Endothelial cell of umbilical vein (primary cell): ENCODE measurements at regions of chr6 and their contacts with region 1.

Region 1: DNA sequence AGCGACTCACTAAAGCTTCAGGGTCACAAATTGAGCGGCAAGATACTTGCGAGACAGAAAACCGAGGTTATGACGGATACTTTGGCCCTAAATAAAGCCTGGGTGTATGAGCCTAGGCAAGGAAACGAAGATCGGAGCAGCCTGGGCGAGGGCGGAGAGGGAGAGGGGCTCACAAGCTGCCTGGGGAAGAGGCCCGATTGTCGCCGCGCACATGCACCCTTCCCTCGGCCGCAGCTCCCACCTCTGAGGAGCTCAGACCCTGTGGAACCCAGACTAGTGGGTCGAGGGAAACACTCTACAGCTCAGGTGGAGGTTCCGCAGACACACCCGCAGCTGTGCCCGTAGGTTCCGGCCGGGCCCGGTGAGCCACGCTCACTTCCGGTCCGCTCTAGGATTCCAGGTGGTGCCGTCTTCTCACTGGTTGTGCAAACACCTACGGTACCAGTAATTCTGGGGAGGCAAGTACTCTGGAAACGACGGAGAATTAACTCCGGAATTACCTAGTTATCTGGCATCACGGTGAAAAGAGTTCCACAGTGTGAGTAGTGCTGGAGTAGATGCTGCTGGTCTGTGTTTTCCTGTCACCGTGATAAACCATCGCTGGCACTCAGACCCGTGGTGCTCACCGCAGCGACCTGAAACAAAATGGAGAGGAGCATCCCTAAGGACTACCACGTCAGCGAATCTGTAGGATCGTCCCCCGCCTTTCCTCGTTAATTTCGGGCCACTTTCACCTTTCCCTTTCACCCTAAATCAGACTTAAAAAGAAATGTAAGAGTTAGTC is 61.5 kb downstream of the GPX5 start:
- DNase-seq: no peak
- H3K4me3 ChIP-seq: peak overlapping the region; percentile 6 to 50 (median 25)
- H3K27ac ChIP-seq: no peak overlapping the region
- H3K4me1 ChIP-seq: peaks cover 12% of the 10 kb centered on the region
- H3K27me3 ChIP-seq: peaks cover 22 to 47% of the 10 kb centered on the region in 2 experiments
- CTCF ChIP-seq: no peak
- POLR2A ChIP-seq: no peak

Region 2: GRCh38 chr6:27902335-27903314 is 684.5 kb before region 1 on chr6:
- CTCF ChIA-PET with region 1: no interaction called
- POLR2A ChIA-PET with region 1: no interaction called
- dilution Hi-C with region 1: no loop called
- intact Hi-C with region 1: loop called (anchors 10 kb)
- DNase-seq: peak; percentile 92
- H3K4me3 ChIP-seq: peak overlapping the region; percentile 39 to 91 (median 86)
- H3K27ac ChIP-seq: peak overlapping the region; percentile 37
- H3K4me1 ChIP-seq: no peaks in the 10 kb centered on the region
- H3K27me3 ChIP-seq: peaks cover 0 to 11% of the 10 kb centered on the region in 2 experiments
- CTCF ChIP-seq: no peak
- POLR2A ChIP-seq: no peak

Region 3: DNA sequence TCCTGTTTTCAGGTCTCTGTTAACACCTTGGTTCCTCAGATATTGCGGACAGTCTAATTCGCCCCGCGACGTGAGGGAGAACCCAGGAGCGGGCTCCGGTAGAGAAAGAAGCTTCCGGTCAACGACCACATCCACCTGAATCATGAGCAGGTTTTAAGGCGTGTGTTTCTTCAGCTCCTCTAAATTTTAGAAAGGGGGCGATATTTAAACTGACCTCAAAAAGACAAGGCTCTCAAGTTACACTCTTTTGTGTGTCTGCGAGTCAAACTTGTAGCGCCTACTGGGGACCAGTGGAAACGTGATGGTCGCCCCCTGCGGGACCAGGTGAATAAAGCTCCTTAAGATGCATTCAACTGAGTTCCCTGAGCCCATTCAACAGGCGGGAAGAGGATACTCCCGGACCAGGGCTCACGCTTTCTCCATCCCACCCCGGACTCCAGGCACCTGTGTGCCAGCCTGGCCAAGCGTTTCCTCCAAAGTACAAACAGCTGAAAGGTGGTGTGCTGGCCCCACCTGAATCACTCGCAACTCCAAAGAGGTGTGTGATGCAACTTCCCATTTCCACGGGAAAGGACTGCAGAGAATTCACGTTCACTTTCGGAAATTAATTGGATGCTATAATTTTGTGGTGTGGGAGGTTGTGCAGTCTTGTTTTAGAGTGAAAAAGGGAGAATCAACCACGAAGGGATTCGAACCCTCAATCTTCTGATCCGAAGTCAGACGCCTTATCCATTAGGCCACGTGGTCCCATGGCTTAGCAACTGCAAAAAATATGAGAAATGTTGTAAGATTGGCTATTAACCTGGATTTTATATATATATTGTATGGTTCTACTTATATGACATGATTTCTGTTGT is 44.5 kb before region 1 on chr6:
- CTCF ChIA-PET with region 1: interaction called, 3 read pairs
- POLR2A ChIA-PET with region 1: no interaction called
- dilution Hi-C with region 1: no loop called
- intact Hi-C with region 1: loop called (anchors 2 kb)
- DNase-seq: peak; percentile 70
- H3K4me3 ChIP-seq: no peak overlapping the region
- H3K27ac ChIP-seq: no peak overlapping the region
- H3K4me1 ChIP-seq: peaks cover 13% of the 10 kb centered on the region
- H3K27me3 ChIP-seq: peaks cover 0 to under 1% of the 10 kb centered on the region in 2 experiments
- CTCF ChIP-seq: peak in 1 of 2 donors; percentile 33
- POLR2A ChIP-seq: no peak

Region 4: GRCh38 chr6:28648035-28648877 is 61.1 kb after region 1 on chr6:
- CTCF ChIA-PET with region 1: interaction called, 3 read pairs
- POLR2A ChIA-PET with region 1: no interaction called
- dilution Hi-C with region 1: no loop called
- intact Hi-C with region 1: loop called (anchors 2 kb)
- DNase-seq: peak; percentile 86
- H3K4me3 ChIP-seq: peak overlapping the region; percentile 47 to 97 (median 70)
- H3K27ac ChIP-seq: peak overlapping the region; percentile 14
- H3K4me1 ChIP-seq: peaks cover 3% of the 10 kb centered on the region
- H3K27me3 ChIP-seq: peaks cover 7 to 20% of the 10 kb centered on the region in 2 experiments
- CTCF ChIP-seq: no peak
- POLR2A ChIP-seq: no peak

Region 5: DNA sequence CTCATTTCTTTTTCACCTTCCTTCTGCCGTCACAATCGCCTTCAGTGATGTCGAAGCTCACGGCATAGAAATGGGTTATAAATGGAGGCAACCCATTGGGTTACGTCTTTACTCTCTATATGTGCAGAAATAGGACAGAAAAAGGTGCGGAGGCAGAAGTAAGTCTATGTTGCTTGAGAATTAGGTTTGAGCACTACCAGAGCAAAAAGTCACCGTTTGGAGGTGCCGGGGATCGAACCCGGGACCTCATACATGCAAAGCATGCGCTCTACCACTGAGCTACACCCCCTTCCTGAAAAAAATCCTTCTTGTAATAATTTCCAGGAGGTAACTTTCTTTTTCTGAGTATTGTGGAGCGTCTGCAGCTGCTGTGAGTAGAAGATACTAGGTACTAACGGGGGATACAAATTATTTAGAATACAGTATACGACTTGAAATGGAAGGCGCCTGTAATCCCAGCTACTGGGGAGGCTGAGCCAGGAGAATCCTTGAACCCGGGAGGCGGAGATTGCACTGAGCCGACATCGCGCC is 202.5 kb after region 1 on chr6:
- CTCF ChIA-PET with region 1: no interaction called
- POLR2A ChIA-PET with region 1: no interaction called
- dilution Hi-C with region 1: no loop called
- intact Hi-C with region 1: loop called (anchors 2 kb)
- DNase-seq: peak; percentile 49
- H3K4me3 ChIP-seq: peak overlapping the region; percentile 5 to 65 (median 57)
- H3K27ac ChIP-seq: no peak overlapping the region
- H3K4me1 ChIP-seq: peaks cover under 1% of the 10 kb centered on the region
- H3K27me3 ChIP-seq: peaks cover 37 to 56% of the 10 kb centered on the region in 2 experiments
- CTCF ChIP-seq: no peak
- POLR2A ChIP-seq: no peak

Region 6: GRCh38 chr6:28876710-28877109 is 289.6 kb after region 1 on chr6:
- CTCF ChIA-PET with region 1: no interaction called
- POLR2A ChIA-PET with region 1: no interaction called
- dilution Hi-C with region 1: no loop called
- intact Hi-C with region 1: no loop called
- DNase-seq: no peak
- H3K4me3 ChIP-seq: no peak overlapping the region
- H3K27ac ChIP-seq: no peak overlapping the region
- H3K4me1 ChIP-seq: peaks cover 2% of the 10 kb centered on the region
- H3K27me3 ChIP-seq: peaks cover 15 to 16% of the 10 kb centered on the region in 2 experiments
- CTCF ChIP-seq: no peak
- POLR2A ChIP-seq: no peak